ENCODE measurements at regions of chr3 and their contacts with region 1.

Region 1: DNA sequence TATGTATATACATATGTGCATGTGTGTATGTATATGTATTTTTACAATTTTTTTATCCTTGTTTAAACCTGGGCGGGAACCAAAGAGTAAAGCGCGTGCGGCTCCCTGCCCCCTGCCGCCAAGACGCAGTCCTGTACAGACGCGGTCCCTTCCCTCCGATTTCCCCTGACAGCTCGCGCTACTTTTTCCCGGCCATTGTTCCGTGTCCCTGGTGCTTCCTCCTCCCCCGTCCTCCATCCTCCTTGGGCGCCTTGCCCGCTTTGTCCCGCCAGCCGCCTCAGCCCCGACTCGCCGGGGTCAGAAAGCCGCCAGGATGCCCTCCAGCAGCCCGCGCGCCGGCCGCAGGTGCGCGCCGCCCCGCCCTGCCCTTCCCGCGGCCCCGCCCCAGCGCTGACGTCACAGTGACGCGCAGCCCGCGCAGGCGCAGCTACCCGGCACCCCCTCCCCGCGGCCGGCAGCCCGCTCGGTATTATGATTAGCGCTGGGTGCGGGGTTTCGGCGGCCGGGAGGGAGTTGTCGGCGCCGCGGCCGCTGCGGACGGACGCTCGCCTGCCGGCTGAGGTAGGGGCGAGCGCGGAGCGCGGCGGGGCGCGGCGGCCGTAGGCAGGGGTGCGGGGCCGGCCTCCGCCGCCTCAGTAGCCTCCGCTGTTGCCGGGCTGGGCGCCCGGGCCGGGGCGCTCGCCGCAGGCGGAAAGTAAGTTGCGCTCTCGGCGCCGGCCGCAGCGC is at the start of gene SNRK:
- DNase-seq: peak; percentile 98
- ATAC-seq: peak; percentile 88
- H3K4me3 Mint-ChIP-seq: peak within 1 kb of the TSS; percentile 97
- H3K27ac Mint-ChIP-seq: peak within 1 kb of the TSS; percentile 95
- H3K4me1 Mint-ChIP-seq: peaks cover 49% of the 10 kb centered on the region
- H3K27me3 Mint-ChIP-seq: no peaks in the 10 kb centered on the region
- CTCF ChIP-seq: no peak
- total RNA-seq, gene SNRK: 31.1 TPM in 2 replicates

Region 2: DNA sequence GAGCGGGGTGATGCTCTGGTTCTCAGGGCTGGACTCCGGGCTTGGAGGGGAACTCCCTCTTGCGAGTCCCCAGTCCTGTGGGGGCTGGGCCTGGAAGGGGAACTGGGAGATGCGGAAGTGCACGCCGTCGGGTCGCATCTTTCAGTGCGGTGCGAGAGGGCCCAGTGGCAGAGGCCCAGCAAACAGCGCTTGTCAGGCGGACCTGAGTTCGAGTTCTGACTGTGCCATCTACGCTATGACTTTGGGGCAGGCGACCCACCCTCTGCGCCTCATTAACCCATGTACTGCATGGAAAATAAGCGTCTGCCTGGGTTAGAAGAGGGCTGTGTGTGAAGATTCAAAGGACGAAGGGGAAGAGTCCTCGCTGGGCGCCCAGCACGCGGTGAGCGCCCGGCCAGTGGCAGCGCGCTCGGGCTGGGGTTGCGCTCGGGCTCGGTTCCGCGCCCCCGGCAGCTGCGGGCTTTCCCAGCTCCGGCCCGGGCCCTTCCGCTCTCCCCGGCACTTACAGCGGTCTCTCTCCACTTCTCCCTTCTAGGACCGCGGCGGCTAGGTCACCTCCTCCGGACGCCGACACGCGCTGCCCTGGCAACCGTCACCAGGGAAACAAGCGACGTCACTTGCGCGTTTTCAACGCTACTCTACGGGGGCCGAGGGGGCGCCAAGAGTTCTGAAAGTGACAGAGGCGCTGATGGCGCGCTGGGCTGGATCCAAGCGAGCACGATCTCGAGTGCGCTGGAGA is 513.4 kb before region 1 on chr3 and contains the start of gene CCDC13:
- CTCF ChIA-PET with region 1: no interaction called
- POLR2A ChIA-PET with region 1: no interaction called
- intact Hi-C with region 1: loop called (anchors 1 kb)
- DNase-seq: peak; percentile 97
- ATAC-seq: peak; percentile 90
- H3K4me3 Mint-ChIP-seq: peak within 1 kb of the TSS; percentile 90
- H3K27ac Mint-ChIP-seq: peak within 1 kb of the TSS; percentile 89
- H3K4me1 Mint-ChIP-seq: peaks cover 13% of the 10 kb centered on the region
- H3K27me3 Mint-ChIP-seq: no peaks in the 10 kb centered on the region
- CTCF ChIP-seq: no peak
- total RNA-seq, gene CCDC13: 1.7 and 1.9 TPM in 2 replicates

Region 3: DNA sequence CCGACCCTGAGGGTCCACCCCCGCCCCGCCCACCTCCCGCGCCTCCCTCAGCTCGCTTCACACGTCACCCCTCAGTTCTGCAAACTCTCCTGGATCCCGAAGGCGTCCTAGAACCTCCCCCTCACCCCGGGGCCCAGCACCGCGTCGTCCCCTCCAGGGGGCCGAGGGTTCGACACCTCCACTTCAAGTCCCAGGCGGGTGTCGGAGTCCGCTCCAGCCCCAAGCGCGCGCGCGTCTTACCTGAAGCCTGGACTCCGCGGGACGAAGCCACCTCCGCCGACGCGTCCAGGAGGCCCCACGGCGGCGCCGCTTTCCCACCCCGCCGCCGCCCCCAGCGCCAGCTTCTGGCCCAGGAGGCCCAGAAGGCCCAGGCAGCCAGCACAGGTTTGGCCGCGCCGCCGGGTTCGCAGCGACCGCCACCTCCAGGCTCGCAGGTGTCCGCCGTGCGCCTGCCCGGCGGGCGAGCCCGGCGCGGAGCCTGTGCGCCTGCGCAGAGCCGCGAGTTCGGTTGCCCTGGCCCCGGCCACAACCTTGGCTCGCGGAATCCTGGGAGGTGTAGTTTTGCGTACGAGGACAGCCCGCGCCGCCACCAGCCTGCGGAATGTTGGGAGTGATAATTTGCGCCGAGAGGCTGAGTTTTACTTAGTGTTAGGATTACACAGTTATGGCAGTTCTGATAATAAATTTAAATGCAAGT is 180.5 kb before region 1 on chr3 and contains the start of gene POMGNT2:
- CTCF ChIA-PET with region 1: no interaction called
- POLR2A ChIA-PET with region 1: no interaction called
- intact Hi-C with region 1: loop called (anchors 2 kb)
- DNase-seq: peak; percentile 80
- ATAC-seq: peak; percentile 98
- H3K4me3 Mint-ChIP-seq: peak within 1 kb of the TSS; percentile 79
- H3K27ac Mint-ChIP-seq: no peak within 1 kb of the TSS
- H3K4me1 Mint-ChIP-seq: peaks cover 14% of the 10 kb centered on the region
- H3K27me3 Mint-ChIP-seq: no peaks in the 10 kb centered on the region
- CTCF ChIP-seq: no peak
- total RNA-seq, gene POMGNT2: 2.6 and 2.7 TPM in 2 replicates

Region 4: DNA sequence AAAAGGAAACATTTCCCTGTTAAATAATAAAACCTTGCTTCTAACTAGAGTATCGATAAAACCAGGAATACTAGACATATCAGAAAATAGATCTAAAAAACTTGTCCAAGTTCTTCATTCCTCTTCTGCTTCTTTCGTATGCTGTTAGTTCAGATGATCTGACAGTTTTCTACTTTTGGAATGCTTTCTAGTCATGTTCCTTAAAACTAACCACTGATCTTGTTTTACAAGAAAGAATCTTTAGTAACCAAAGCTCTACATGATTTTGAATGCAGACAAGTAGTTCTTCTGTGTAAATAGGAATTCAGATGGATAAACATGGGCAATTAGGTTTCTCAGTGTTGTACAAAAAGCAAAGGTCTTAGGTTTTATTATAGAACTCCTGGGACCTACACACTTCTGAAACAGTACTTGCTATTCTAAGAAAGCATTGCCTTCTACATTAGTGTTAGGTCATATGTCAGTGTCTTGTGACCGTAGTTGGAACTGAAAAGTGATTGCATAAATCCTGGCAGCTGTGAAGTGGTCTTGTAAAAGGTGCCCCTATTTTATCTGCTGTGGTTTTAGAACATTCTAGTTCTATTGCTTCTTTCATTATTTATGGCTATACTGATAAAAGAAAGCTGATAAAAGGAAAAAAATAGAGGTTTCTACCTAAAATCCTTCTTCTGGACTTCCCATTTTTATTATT is 40.8 kb after region 1 on chr3:
- CTCF ChIA-PET with region 1: no interaction called
- POLR2A ChIA-PET with region 1: interaction called, 3 read pairs
- intact Hi-C with region 1: loop called (anchors 2 kb)
- DNase-seq: no peak
- ATAC-seq: no peak
- H3K4me3 Mint-ChIP-seq: no peak overlapping the region
- H3K27ac Mint-ChIP-seq: peak overlapping the region; percentile 76
- H3K4me1 Mint-ChIP-seq: peaks cover 55% of the 10 kb centered on the region
- H3K27me3 Mint-ChIP-seq: no peaks in the 10 kb centered on the region
- CTCF ChIP-seq: no peak

Region 5: GRCh38 chr3:43621656-43622432 is 335.6 kb after region 1 on chr3 and contains the start of gene ANO10:
- CTCF ChIA-PET with region 1: no interaction called
- POLR2A ChIA-PET with region 1: no interaction called
- intact Hi-C with region 1: loop called (anchors 1 kb)
- DNase-seq: peak; percentile 98
- ATAC-seq: peak; percentile 91
- H3K4me3 Mint-ChIP-seq: peak within 1 kb of the TSS; percentile 88
- H3K27ac Mint-ChIP-seq: peak within 1 kb of the TSS; percentile 77
- H3K4me1 Mint-ChIP-seq: peaks cover 13% of the 10 kb centered on the region
- H3K27me3 Mint-ChIP-seq: peaks cover 1% of the 10 kb centered on the region
- CTCF ChIP-seq: no peak
- total RNA-seq, gene ANO10: 6.4 and 8.1 TPM in 2 replicates

Region 6: DNA sequence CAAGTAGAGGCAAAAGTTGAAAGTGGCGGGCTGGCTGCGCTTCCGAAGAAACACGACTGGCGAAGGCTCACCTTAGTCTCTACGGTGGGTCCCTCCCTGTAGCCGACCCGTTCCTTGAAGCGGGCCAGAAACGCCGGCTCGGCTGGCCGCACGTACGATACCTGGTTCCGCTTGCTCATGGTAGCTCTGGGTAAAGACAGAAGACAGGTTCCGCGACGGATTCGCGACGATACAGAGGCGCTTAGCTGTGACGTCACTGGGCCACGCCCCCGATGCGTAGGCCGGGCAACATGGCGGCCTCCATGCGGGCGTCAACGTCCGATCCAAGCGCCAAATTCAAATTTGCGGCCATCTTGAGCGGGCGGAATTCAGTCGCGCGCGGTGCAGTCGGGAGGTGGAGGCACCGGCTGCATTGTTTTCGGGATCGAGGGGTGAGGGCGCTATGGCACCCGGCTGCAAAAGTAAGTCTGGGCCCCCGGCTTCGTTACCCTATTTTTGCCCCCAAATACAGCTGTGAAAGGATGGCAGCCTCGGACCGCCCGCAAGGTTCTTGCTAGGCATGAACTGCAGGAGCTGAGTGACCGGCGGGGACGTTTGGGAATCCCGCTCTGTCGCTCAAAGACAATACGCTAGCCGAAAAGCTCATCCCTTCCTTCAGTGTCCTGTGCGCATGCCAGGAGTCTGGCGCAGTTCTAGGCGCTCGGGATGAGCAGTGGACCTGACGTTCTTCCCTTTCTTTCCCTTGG is 1475.3 kb after region 1 on chr3 and contains the starts of genes KIAA1143 and KIF15:
- CTCF ChIA-PET with region 1: no interaction called
- POLR2A ChIA-PET with region 1: no interaction called
- intact Hi-C with region 1: loop called (anchors 5 kb)
- DNase-seq: peak; percentile 96
- ATAC-seq: peak; percentile 96
- H3K4me3 Mint-ChIP-seq: peak within 1 kb of the TSS; percentile 89
- H3K27ac Mint-ChIP-seq: peak within 1 kb of the TSS; percentile 85
- H3K4me1 Mint-ChIP-seq: peaks cover 25% of the 10 kb centered on the region
- H3K27me3 Mint-ChIP-seq: no peaks in the 10 kb centered on the region
- CTCF ChIP-seq: no peak
- total RNA-seq, gene KIAA1143: 35.4 and 43.6 TPM in 2 replicates
- total RNA-seq, gene KIF15: 2.4 and 3.1 TPM in 2 replicates

Measured in activated B cell treated with CpG ODN at 0.5 μM for 24 hours (primary cell).